MCF 10A (cell line): ENCODE measurements at regions of chr1 and their contacts with region 1.

Region 1: GRCh38 chr1:206808615-206809014 is 36.3 kb upstream of the IL10 start:
- DNase-seq: peak; percentile 67
- H3K4me3 Mint-ChIP-seq: no peak overlapping the region
- H3K27ac Mint-ChIP-seq: no peak overlapping the region
- H3K4me1 Mint-ChIP-seq: peaks cover 5% of the 10 kb centered on the region
- H3K27me3 Mint-ChIP-seq: peaks cover 41% of the 10 kb centered on the region
- CTCF ChIP-seq: peak; percentile 30

Region 2: DNA sequence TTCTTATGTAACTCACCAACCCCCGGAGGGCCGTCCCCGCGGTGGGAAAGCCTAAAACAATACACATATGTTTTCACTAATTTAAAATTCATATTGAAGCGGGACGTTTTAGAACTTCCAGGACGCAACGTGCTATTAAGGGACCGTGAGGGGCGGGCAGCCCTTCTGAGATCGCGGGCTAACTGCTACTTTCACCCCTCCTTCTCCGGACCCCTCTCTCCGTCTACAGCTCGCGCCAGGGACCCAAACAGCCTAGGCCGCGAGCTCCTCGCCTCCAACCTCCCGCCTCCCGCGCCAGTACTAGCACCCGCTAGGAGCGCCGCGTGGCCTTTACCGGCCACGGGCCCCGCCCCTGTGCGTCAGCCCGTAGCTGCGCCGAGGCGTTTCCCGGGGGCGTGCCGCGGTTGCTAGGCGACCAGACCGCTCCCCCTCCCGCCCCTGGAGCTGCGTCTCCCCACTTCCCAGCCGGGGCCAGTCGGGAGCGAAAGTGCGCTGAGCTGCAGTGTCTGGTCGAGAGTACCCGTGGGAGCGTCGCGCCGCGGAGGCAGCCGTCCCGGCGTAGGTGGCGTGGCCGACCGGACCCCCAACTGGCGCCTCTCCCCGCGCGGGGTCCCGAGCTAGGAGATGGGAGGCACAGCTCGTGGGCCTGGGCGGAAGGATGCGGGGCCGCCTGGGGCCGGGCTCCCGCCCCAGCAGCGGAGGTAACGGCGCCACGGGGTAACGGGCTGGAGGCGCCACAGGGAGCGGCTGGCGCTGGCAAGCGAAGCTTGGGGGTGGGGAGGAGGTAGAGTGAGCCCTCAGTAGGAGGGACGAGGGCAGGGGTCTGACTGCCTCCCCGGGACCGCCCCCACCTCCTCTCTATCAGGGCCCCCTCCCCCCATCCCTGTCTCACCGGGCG is 173.3 kb before region 1 on chr1 and contains the start of gene DYRK3:
- CTCF ChIA-PET with region 1: interaction called, 5 read pairs
- POLR2A ChIA-PET with region 1: no interaction called
- intact Hi-C with region 1: loop called (anchors 1 kb)
- DNase-seq: peak; percentile 99
- H3K4me3 Mint-ChIP-seq: peak within 1 kb of the TSS; percentile 89
- H3K27ac Mint-ChIP-seq: peak within 1 kb of the TSS; percentile 82
- H3K4me1 Mint-ChIP-seq: peaks cover 38% of the 10 kb centered on the region
- H3K27me3 Mint-ChIP-seq: no peaks in the 10 kb centered on the region
- CTCF ChIP-seq: no peak
- total RNA-seq, gene DYRK3: 45.4 and 58.5 TPM in 2 replicates

Region 3: DNA sequence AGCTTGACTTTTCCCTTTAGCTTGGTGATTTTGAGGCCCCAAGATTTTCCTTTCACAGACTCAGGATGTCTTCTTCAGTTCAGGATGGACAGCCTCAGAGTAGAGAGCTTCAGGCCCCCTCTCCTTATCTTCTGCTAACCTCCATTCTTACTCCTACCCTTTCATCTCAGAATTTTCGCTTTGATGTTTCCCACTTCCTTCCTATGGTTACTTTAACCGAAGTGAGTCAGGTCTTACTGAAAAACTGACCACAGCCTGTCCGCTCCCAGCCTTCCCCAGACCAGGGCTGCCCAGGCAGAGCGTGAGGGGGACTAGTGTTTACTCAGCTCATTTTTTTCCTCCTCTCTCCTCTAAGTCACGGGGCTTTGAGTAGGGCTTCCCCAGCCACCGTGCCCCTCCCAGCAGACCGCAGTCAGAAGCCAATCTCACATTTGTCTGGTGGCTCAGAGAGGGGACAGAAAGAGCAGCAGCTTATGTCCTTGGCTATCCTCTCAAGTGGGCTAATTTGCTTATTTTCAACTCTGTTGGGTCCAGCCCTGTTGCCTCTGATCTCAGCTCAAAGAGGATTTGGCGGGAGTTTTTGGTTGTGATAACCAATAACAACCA is 42.3 kb before region 1 on chr1:
- CTCF ChIA-PET with region 1: interaction called, 21 read pairs
- POLR2A ChIA-PET with region 1: no interaction called
- intact Hi-C with region 1: no loop called
- DNase-seq: peak; percentile 29
- H3K4me3 Mint-ChIP-seq: no peak overlapping the region
- H3K27ac Mint-ChIP-seq: no peak overlapping the region
- H3K4me1 Mint-ChIP-seq: no peaks in the 10 kb centered on the region
- H3K27me3 Mint-ChIP-seq: peaks cover 32% of the 10 kb centered on the region
- CTCF ChIP-seq: no peak

Region 4: DNA sequence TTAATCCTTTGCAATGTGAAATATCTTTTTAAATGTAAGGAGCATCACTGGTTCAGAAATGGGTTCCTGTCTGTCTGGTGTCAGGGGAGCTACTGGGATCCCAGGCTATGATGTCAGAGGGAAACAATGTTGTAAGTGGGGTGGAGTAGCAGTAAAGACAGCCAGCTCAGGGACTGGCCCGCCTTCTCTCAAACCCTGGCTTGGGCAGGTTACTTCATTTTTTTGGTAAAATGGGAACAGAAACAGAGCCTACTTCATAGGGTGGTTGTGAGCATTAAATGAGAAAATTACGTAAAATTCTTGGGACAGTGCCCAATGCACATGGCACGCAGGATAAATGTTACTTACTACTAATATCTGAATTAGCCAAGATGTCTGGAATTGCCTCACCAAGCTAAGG is 26.1 kb after region 1 on chr1:
- CTCF ChIA-PET with region 1: interaction called, 29 read pairs
- POLR2A ChIA-PET with region 1: interaction called, 7 read pairs
- intact Hi-C with region 1: no loop called
- DNase-seq: peak; percentile 63
- H3K4me3 Mint-ChIP-seq: no peak overlapping the region
- H3K27ac Mint-ChIP-seq: peak overlapping the region; percentile 21
- H3K4me1 Mint-ChIP-seq: peaks cover 31% of the 10 kb centered on the region
- H3K27me3 Mint-ChIP-seq: no peaks in the 10 kb centered on the region
- CTCF ChIP-seq: no peak

Region 5: DNA sequence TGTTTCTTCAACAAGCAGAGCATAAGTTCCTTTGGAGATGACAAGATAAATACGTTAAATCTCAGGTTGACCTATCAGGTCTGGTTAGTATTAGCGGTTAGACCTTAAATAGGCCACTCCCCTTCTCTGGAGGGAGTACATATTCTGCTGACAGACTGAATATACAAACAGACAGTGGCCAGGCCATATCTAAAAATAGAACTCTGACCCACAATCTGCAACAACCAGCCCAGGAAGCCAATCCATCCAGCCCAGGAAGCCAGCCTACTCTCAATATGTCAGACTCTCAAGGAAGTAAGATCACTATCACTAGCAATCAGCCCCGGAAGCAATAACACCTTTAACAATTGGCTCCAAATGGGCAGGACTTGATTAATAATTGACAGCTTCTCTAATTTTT is 63.5 kb after region 1 on chr1:
- CTCF ChIA-PET with region 1: interaction called, 37 read pairs
- POLR2A ChIA-PET with region 1: no interaction called
- intact Hi-C with region 1: no loop called
- DNase-seq: no peak
- H3K4me3 Mint-ChIP-seq: no peak overlapping the region
- H3K27ac Mint-ChIP-seq: no peak overlapping the region
- H3K4me1 Mint-ChIP-seq: peaks cover 24% of the 10 kb centered on the region
- H3K27me3 Mint-ChIP-seq: no peaks in the 10 kb centered on the region
- CTCF ChIP-seq: no peak

Region 6: GRCh38 chr1:206925106-206925736 is 116.6 kb after region 1 on chr1:
- CTCF ChIA-PET with region 1: interaction called, 13 read pairs
- POLR2A ChIA-PET with region 1: no interaction called
- intact Hi-C with region 1: no loop called
- DNase-seq: no peak
- H3K4me3 Mint-ChIP-seq: no peak overlapping the region
- H3K27ac Mint-ChIP-seq: no peak overlapping the region
- H3K4me1 Mint-ChIP-seq: no peaks in the 10 kb centered on the region
- H3K27me3 Mint-ChIP-seq: no peaks in the 10 kb centered on the region
- CTCF ChIP-seq: no peak

Region 7: GRCh38 chr1:207134581-207134980 is 326.0 kb after region 1 on chr1:
- CTCF ChIA-PET with region 1: no interaction called
- POLR2A ChIA-PET with region 1: no interaction called
- intact Hi-C with region 1: no loop called
- DNase-seq: peak; percentile 9
- H3K4me3 Mint-ChIP-seq: no peak overlapping the region
- H3K27ac Mint-ChIP-seq: no peak overlapping the region
- H3K4me1 Mint-ChIP-seq: no peaks in the 10 kb centered on the region
- H3K27me3 Mint-ChIP-seq: no peaks in the 10 kb centered on the region
- CTCF ChIP-seq: no peak